ENCODE measurements at regions of chr9 and their contacts with region 1.

Region 1: GRCh38 chr9:121556580-121556979 is 56.9 kb upstream of the GGTA1 start:
- DNase-seq: no peak
- ATAC-seq: no peak
- H3K4me3 ChIP-seq: no peak overlapping the region
- H3K27ac ChIP-seq: no peak overlapping the region
- H3K4me1 ChIP-seq: no peaks in the 10 kb centered on the region; the same call in 1 of the 2 replicates
- H3K27me3 ChIP-seq: no peaks in the 10 kb centered on the region
- CTCF ChIP-seq: no peak

Region 2: DNA sequence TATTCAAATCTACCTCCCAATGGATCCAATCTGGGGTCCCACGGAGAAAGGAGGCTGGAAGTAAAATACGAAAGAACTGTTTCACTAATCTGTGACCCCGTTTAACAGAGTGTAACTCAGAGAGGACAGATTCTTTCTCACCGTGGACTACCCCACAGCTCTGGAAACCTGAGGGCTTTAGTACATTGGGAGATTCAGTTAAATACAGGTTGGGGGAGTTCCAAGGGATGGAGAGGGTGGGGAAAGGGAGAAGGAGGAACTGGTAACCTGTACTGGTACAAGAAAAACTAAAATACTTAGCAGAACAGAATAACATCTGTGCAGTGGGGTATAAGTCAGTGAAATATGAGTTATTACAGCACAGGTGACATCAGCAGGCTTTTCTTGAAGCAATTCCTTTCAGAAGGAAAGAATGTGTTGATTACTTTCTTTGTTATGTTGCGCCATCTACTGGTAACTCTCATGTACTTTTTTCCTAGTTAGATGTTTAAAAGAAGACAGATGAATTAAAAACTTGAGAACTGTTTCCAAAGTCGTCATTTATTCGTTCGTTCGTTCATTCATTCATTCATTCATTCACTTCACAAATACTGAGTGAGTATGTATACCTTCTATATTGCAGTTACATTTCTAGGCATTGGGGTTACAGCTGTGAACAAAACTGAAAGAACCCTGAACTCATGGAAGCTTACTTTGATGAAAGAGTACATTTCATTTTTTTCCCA is 156.5 kb before region 1 on chr9:
- CTCF ChIA-PET with region 1: no interaction called
- POLR2A ChIA-PET with region 1: no interaction called
- in situ Hi-C with region 1: no loop called
- intact Hi-C with region 1: no loop called
- DNase-seq: peak; percentile 53
- ATAC-seq: peak; percentile 72
- H3K4me3 ChIP-seq: no peak overlapping the region
- H3K27ac ChIP-seq: peak overlapping the region; percentile 35; the same call in 1 of the 2 replicates
- H3K4me1 ChIP-seq: no peaks in the 10 kb centered on the region
- H3K27me3 ChIP-seq: no peaks in the 10 kb centered on the region
- CTCF ChIP-seq: peak; percentile 44

Region 3: GRCh38 chr9:121447321-121447834 is 109.2 kb before region 1 on chr9:
- CTCF ChIA-PET with region 1: interaction called, 12 read pairs
- POLR2A ChIA-PET with region 1: no interaction called
- in situ Hi-C with region 1: no loop called
- intact Hi-C with region 1: no loop called
- DNase-seq: no peak
- ATAC-seq: no peak
- H3K4me3 ChIP-seq: no peak overlapping the region
- H3K27ac ChIP-seq: no peak overlapping the region
- H3K4me1 ChIP-seq: no peaks in the 10 kb centered on the region
- H3K27me3 ChIP-seq: peaks cover 2% of the 10 kb centered on the region; the same call in 1 of the 2 replicates
- CTCF ChIP-seq: no peak

Region 4: DNA sequence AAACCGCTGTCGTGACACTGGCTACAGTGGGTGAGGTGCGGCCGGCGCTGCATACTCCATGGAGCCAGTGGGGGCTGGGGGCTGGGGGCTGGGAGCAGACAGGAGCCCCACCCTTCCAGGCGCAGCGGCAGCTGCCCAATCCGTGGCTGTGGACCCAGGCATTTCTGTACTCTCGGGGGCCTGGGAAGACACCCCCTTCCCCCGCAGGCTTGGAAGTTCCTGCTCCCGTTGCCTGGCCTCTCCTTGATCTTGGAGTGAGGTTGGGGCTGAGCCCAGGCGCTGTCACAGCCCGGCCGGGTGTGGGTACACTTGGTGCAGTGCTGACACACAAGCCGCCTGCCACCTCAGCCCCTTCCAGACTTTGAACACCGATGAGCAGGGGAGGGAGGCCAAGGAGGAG is 29.2 kb before region 1 on chr9:
- CTCF ChIA-PET with region 1: interaction called, 10 read pairs
- POLR2A ChIA-PET with region 1: no interaction called
- in situ Hi-C with region 1: no loop called
- intact Hi-C with region 1: no loop called
- DNase-seq: no peak
- ATAC-seq: no peak
- H3K4me3 ChIP-seq: no peak overlapping the region
- H3K27ac ChIP-seq: no peak overlapping the region
- H3K4me1 ChIP-seq: no peaks in the 10 kb centered on the region
- H3K27me3 ChIP-seq: no peaks in the 10 kb centered on the region
- CTCF ChIP-seq: no peak

Region 5: GRCh38 chr9:121577166-121577565 is 20.6 kb after region 1 on chr9:
- CTCF ChIA-PET with region 1: interaction called, 5 read pairs
- POLR2A ChIA-PET with region 1: interaction called, 10 read pairs
- in situ Hi-C with region 1: no loop called
- intact Hi-C with region 1: no loop called
- DNase-seq: no peak
- ATAC-seq: no peak
- H3K4me3 ChIP-seq: no peak overlapping the region
- H3K27ac ChIP-seq: no peak overlapping the region
- H3K4me1 ChIP-seq: no peaks in the 10 kb centered on the region; the same call in 1 of the 2 replicates
- H3K27me3 ChIP-seq: no peaks in the 10 kb centered on the region
- CTCF ChIP-seq: no peak

Measured in Panc1 (cell line).